ENCODE measurements at regions of chr3 and their contacts with region 1.

Region 1: DNA sequence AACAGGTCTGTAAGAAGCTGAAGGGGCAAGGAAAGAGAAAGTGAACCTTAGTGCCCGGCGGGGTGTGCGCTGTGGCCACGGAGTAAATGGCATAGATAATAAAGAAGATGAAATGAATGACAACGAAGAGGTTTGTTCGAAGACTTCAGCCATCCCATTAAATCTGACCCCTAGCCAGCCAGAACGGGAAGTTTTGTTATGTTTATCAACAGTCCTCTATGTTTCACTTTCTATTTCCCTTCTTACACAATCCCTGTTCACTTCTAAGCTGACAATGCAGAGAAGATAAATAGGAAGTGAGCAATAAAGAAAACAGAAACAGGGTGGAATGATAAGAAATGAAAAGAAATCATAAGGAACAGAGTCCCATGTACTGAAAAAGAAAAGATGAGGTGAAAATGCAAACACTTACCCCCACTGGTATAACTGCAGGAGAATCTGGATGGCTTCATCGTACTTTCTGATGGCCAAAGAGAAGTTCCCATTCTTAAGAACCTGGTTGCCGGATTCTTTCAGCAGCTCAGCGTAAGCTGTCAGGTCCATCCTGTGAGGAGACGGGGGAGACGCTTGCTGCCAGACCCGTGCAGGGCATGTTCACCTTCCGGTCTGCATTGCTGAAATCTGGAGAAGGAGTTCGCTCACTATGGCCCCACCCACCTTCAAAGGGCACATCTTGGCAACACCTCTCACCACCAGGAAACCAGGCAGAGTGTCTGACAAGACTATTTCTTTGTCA is 36.8 kb downstream of the TRANK1 start:
- DNase-seq: peak; percentile 49 to 52
- H3K4me3 ChIP-seq: peak overlapping the region; percentile 61
- H3K27ac ChIP-seq: peak overlapping the region; percentile 15; the same call in 1 of the 2 replicates
- H3K4me1 ChIP-seq: peaks cover 16% of the 10 kb centered on the region; the same call in 1 of the 2 replicates
- H3K27me3 ChIP-seq: no peaks in the 10 kb centered on the region
- CTCF ChIP-seq: no peak

Region 2: GRCh38 chr3:36229496-36229895 is 678.6 kb before region 1 on chr3:
- CTCF ChIA-PET with region 1: no interaction called
- POLR2A ChIA-PET with region 1: no interaction called
- intact Hi-C with region 1: no loop called
- DNase-seq: no peak
- H3K4me3 ChIP-seq: no peak overlapping the region
- H3K27ac ChIP-seq: no peak overlapping the region
- H3K4me1 ChIP-seq: no peaks in the 10 kb centered on the region
- H3K27me3 ChIP-seq: no peaks in the 10 kb centered on the region
- CTCF ChIP-seq: no peak

Region 3: GRCh38 chr3:36993326-36994283 is 85.5 kb after region 1 on chr3 and contains the start of gene MLH1:
- CTCF ChIA-PET with region 1: no interaction called
- POLR2A ChIA-PET with region 1: interaction called, 10 read pairs
- intact Hi-C with region 1: no loop called
- DNase-seq: peak in 1 of 2 experiments; percentile 99
- H3K4me3 ChIP-seq: peak within 1 kb of the TSS; percentile 83
- H3K27ac ChIP-seq: peak within 1 kb of the TSS; percentile 79
- H3K4me1 ChIP-seq: peaks cover 28% of the 10 kb centered on the region
- H3K27me3 ChIP-seq: no peaks in the 10 kb centered on the region
- CTCF ChIP-seq: no peak
- total RNA-seq, gene MLH1: 30.9 and 35.2 TPM in 2 replicates

Region 4: DNA sequence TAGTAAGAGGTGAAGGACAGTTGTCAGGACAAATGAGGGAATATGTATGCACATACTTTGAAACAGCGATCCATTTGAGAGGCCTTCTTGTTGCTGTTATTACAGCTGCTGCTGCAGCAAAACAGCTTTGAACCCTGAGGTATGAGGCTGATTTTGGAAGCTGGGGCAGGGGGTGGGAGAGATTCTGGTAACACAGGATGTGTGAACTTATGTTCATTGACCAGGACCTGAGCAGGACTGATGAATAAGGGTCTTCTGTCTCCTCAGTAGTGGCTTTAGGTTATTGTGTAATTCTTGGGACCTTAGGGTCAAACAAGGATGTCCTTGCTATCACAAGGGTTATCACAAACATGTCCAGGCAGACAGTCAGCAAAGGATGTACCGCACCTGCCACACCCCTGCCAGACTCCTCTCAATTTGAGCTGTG is 995.2 kb after region 1 on chr3:
- CTCF ChIA-PET with region 1: interaction called, 12 read pairs
- POLR2A ChIA-PET with region 1: no interaction called
- intact Hi-C with region 1: no loop called
- DNase-seq: no peak
- H3K4me3 ChIP-seq: no peak overlapping the region
- H3K27ac ChIP-seq: no peak overlapping the region
- H3K4me1 ChIP-seq: 0 out of 2 replicates have a peak, but pooled peaks cover 7% of the 10 kb centered on the region
- H3K27me3 ChIP-seq: no peaks in the 10 kb centered on the region
- CTCF ChIP-seq: no peak